H1 (cell line): ENCODE measurements at regions of chr3 and their contacts with region 1.

Region 1: DNA sequence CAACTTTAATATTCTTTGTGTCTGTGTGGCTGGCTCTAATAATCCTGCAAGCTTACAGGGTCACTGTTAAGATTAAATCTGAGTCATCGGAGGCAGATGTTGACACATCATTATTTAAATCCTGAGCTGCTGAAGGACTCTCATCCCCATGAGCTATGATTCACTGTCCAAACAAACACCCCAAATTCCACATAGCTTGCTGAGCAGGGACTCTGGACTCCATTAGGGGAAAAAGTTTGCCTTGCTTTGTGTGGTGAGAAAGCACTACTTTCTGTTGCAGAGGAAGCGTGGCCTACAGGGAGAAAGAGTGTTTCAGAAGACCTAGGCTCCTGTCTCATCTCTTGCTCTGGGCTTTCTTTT is 213.7 kb downstream of the PDCD6IP start:
- DNase-seq: no peak
- H3K4me3 ChIP-seq: no peak overlapping the region
- H3K27ac ChIP-seq: no peak overlapping the region
- H3K4me1 ChIP-seq: peaks cover 0 to 10% (median 6%) of the 10 kb centered on the region in 4 experiments; a peak in 5 of 7 replicates
- H3K27me3 ChIP-seq: peaks cover 0 to 1% (median 0%) of the 10 kb centered on the region in 4 experiments; a peak in 1 of 7 replicates
- CTCF ChIP-seq: no peak
- EP300 ChIP-seq: no peak
- POLR2A ChIP-seq: no peak
- RAD21 ChIP-seq: no peak

Region 2: GRCh38 chr3:33915791-33916546 is 96.1 kb before region 1 on chr3:
- CTCF ChIA-PET with region 1: interaction called, 13 read pairs
- POLR2A ChIA-PET with region 1: no interaction called
- DNase-seq: peak in 1 of 2 experiments; percentile 5
- H3K4me3 ChIP-seq: no peak overlapping the region
- H3K27ac ChIP-seq: no peak overlapping the region
- H3K4me1 ChIP-seq: peaks cover 0 to 3% (median 0%) of the 10 kb centered on the region in 4 experiments; a peak in 1 of 7 replicates
- H3K27me3 ChIP-seq: no peaks in the 10 kb centered on the region
- CTCF ChIP-seq: peak; percentile 48 to 50 (median 49)
- EP300 ChIP-seq: no peak
- POLR2A ChIP-seq: no peak
- RAD21 ChIP-seq: peak; percentile 75 to 80

Region 3: DNA sequence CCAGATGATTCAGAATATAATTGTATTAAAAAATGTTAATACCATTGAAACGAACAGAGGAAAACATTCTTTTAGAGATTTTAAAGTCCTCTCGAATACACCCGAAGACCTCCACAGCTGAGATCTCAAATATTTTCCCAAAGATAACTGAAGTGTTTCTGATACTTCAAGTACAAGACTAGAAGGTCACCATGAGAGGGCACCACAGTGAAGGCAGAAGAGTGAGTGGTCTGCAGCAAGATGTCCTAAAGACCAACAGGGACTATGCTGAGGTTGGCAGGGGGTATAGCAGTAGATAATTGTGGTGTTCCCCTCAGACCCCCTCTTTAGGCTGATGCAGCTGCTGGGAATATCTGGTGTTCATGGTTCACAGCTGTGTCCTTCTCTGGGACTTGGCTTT is 57.1 kb before region 1 on chr3:
- CTCF ChIA-PET with region 1: interaction called, 18 read pairs
- POLR2A ChIA-PET with region 1: no interaction called
- DNase-seq: no peak
- H3K4me3 ChIP-seq: no peak overlapping the region
- H3K27ac ChIP-seq: no peak overlapping the region
- H3K4me1 ChIP-seq: peaks cover 0 to 3% (median under 1%) of the 10 kb centered on the region in 4 experiments; a peak in 2 of 7 replicates
- H3K27me3 ChIP-seq: no peaks in the 10 kb centered on the region
- CTCF ChIP-seq: peak in 2 of 3 experiments; percentile 51 to 53; a peak in 3 of 4 replicates
- EP300 ChIP-seq: no peak
- POLR2A ChIP-seq: no peak
- RAD21 ChIP-seq: peak; percentile 77 to 82

Region 4: GRCh38 chr3:33991673-33992072 is 20.4 kb before region 1 on chr3:
- CTCF ChIA-PET with region 1: interaction called, 10 read pairs
- POLR2A ChIA-PET with region 1: no interaction called
- DNase-seq: no peak
- H3K4me3 ChIP-seq: no peak overlapping the region
- H3K27ac ChIP-seq: no peak overlapping the region
- H3K4me1 ChIP-seq: peaks cover 0 to 5% (median 0%) of the 10 kb centered on the region in 4 experiments; a peak in 1 of 7 replicates
- H3K27me3 ChIP-seq: no peaks in the 10 kb centered on the region
- CTCF ChIP-seq: no peak
- EP300 ChIP-seq: no peak
- POLR2A ChIP-seq: no peak
- RAD21 ChIP-seq: no peak

Region 5: GRCh38 chr3:34035775-34036413 is 23.8 kb after region 1 on chr3:
- CTCF ChIA-PET with region 1: interaction called, 10 read pairs
- POLR2A ChIA-PET with region 1: no interaction called
- DNase-seq: no peak
- H3K4me3 ChIP-seq: no peak overlapping the region
- H3K27ac ChIP-seq: no peak overlapping the region
- H3K4me1 ChIP-seq: no peaks in the 10 kb centered on the region
- H3K27me3 ChIP-seq: no peaks in the 10 kb centered on the region
- CTCF ChIP-seq: no peak
- EP300 ChIP-seq: no peak
- POLR2A ChIP-seq: no peak
- RAD21 ChIP-seq: no peak

Region 6: GRCh38 chr3:34140616-34141015 is 128.5 kb after region 1 on chr3:
- CTCF ChIA-PET with region 1: no interaction called
- POLR2A ChIA-PET with region 1: no interaction called
- DNase-seq: no peak
- H3K4me3 ChIP-seq: no peak overlapping the region
- H3K27ac ChIP-seq: no peak overlapping the region
- H3K4me1 ChIP-seq: peaks cover 0 to 2% (median 0%) of the 10 kb centered on the region in 4 experiments; a peak in 2 of 7 replicates
- H3K27me3 ChIP-seq: no peaks in the 10 kb centered on the region
- CTCF ChIP-seq: no peak
- EP300 ChIP-seq: no peak
- POLR2A ChIP-seq: no peak
- RAD21 ChIP-seq: no peak